ENCODE measurements at regions of chr4 and their contacts with region 1.

Region 1: GRCh38 chr4:3136453-3136852 is 62.0 kb downstream of the HTT start:
- DNase-seq: no peak
- H3K4me3 Mint-ChIP-seq: no peak overlapping the region
- H3K27ac Mint-ChIP-seq: no peak overlapping the region
- H3K4me1 Mint-ChIP-seq: peaks cover under 1% of the 10 kb centered on the region
- H3K27me3 Mint-ChIP-seq: no peaks in the 10 kb centered on the region

Region 2: DNA sequence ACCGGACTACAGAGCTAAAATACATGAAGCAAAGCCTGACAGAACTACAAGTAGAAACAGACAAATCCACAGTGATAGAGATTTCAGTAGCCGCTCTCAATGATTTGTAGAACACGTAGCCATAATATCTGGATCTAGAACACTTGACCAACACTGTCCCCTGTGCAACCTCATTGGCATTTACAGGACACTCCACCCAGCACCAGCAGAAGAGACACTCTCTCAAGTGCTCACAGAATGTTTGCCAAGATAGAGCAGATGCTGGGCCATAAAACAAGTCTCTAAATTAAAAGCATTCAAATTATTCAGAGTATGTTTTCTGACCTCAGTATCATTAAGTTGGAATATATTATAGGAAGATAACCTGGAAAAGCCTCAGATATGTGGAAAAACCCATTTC is 40.3 kb before region 1 on chr4:
- CTCF ChIA-PET with region 1: no interaction called
- POLR2A ChIA-PET with region 1: no interaction called
- DNase-seq: no peak
- H3K4me3 Mint-ChIP-seq: no peak overlapping the region
- H3K27ac Mint-ChIP-seq: no peak overlapping the region
- H3K4me1 Mint-ChIP-seq: peaks cover 5% of the 10 kb centered on the region
- H3K27me3 Mint-ChIP-seq: no peaks in the 10 kb centered on the region

Region 3: DNA sequence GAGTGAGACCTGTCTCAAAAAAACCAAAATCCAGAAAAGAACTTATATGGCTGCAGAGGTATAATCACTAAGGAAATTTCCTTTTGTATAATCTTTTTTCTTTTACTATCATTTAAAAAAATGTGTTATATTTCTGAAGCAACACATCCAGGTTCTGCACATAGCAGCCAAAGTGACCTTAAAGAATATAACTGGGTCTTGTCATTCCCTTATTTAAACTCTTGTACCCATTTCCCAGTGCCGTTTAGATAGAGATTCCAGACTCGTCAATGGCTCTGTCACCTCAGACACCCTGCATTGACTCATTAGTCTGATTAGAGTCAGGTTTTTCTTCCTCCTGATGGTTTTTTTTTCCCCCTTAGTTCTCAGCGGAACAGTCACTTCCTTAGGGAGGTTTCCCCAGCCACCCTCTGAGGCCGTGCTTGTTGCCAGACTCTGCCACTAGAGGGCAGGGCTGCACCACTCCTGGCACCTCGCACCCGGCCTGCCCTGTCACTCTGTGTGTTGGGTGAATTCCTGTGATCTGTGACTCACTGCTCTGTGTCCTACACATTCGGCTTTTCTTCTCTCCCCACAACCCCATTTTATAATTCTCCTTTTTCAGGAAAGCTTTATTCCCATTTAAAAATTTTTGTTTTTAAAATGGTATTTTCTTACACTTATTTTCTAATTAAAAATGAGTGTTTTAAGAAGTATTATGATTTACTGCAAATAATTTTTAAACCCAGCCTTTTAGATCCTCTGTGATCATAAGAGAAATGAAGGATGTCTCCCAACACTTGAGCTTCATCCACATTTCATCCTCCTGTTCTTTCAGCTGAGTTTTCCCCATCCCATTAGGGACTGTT is 29.9 kb before region 1 on chr4:
- CTCF ChIA-PET with region 1: interaction called, 30 read pairs
- POLR2A ChIA-PET with region 1: no interaction called
- DNase-seq: peak; percentile 87
- H3K4me3 Mint-ChIP-seq: no peak overlapping the region
- H3K27ac Mint-ChIP-seq: peak overlapping the region; percentile 52
- H3K4me1 Mint-ChIP-seq: peaks cover 11% of the 10 kb centered on the region
- H3K27me3 Mint-ChIP-seq: no peaks in the 10 kb centered on the region

Region 4: GRCh38 chr4:3122081-3122563 is 14.3 kb before region 1 on chr4:
- CTCF ChIA-PET with region 1: interaction called, 17 read pairs
- POLR2A ChIA-PET with region 1: no interaction called
- DNase-seq: no peak
- H3K4me3 Mint-ChIP-seq: no peak overlapping the region
- H3K27ac Mint-ChIP-seq: no peak overlapping the region
- H3K4me1 Mint-ChIP-seq: peaks cover 6% of the 10 kb centered on the region
- H3K27me3 Mint-ChIP-seq: no peaks in the 10 kb centered on the region

Measured in activated CD4-positive, alpha-beta memory T cell treated with anti-CD3 and anti-CD28 coated beads, Interleukin-2, amount 10 ng/mL, durations not matched to agents 7 days and 5 days (primary cell).